Activated CD4-positive, alpha-beta T cell treated with anti-CD3 and anti-CD28 coated beads, Interleukin-2, amount 10 ng/mL, durations not matched to agents 24 days and 14 days (primary cell): ENCODE measurements at regions of chr12 and their contacts with region 1.

Region 1: DNA sequence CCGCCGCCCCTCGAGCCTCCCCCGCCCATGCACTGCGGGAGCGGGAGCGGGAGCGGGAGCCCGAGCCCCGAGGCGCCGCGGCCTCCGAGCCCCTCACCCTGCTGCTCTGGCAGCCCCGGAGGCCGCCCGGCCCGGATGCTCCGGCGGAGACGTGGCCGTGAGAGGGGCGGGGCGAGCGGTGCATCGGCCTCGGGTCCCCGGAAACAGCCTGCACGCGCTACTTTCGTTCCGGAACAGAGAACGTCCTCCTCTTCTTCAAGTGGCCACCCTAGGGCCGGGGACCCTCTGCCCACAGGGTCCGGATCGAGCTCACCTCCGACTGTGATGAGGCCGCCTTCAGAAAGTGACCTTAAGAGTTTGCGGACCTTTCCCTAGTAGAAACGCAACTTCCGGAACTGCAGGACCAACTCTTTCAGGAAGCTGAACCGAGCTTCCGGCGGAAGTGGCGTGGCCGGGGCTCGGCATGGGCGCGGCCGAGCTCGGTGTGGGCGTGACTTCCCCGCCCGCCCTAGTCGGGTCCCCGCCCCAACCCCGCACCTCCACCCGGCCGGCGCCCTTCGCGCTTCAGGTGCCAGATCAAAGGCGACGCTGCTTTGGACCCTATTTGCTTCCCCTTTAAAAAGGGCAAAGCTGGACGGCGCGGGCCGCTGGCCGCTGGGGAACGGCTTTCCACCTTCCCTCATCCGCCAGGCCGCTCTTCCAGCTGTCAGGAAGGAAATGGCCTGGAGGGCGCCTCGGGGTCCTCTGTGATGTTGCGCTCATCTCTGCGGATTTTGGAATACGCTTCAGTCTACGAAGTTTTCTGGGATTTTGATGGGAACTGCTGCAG is at the start of gene GOLGA3:
- DNase-seq: peak; percentile 98
- H3K4me3 Mint-ChIP-seq: peak within 1 kb of the TSS; percentile 98
- H3K27ac Mint-ChIP-seq: peak within 1 kb of the TSS; percentile 100
- H3K4me1 Mint-ChIP-seq: peaks cover 30% of the 10 kb centered on the region
- H3K27me3 Mint-ChIP-seq: no peaks in the 10 kb centered on the region
- total RNA-seq, gene GOLGA3: 67.6 and 68.1 TPM in 2 replicates

Region 2: GRCh38 chr12:132583736-132584135 is 245.2 kb before region 1 on chr12:
- intact Hi-C with region 1: no loop called
- DNase-seq: no peak
- H3K4me3 Mint-ChIP-seq: no peak overlapping the region
- H3K27ac Mint-ChIP-seq: no peak overlapping the region
- H3K4me1 Mint-ChIP-seq: no peaks in the 10 kb centered on the region
- H3K27me3 Mint-ChIP-seq: no peaks in the 10 kb centered on the region

Region 3: DNA sequence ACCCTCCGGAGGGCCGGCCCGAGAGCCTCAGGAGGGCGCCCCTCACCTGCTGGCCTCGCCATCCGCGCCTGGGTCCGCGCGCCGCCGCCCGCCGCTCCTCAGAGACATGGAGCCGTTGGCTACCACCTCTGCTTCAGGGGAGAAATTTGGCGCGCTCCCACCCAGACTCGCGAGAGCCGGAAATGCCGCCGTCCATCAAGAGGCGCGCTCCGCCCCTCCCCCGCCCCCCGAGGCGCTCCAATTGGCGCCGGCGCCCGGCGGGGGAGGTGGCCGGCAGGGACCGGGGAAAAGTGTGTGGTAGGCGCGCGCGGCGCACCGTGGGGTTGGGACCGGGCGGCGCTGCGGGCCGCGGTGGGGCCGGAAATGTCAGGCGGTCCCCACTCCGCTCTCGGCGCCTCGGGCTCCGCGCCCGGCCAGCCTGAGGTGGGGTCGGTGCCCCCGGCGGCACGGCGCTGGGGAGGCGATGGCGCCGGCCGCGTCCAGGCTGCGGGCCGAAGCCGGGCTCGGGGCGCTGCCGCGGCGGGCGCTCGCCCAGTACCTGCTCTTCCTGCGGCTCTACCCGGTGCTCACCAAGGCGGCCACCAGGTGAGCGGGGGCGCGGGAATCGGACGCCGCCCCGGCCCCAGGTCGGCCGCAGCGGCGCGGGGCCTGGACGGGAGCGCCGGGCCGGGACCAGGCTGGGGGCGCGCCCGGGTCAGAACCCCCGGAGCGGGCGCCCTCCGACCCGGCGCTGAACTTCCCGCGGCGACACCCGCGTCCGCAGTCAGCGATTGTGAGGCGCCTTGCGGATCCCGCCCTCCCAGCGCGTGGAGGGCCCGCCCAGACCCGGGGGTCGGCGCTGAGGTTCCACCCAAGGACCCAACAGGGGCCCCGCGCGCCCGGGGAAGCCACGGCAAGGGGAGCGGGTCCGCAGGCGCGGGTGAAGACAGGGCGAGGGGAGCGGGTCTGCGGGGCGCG is 141.4 kb before region 1 on chr12 and contains the starts of genes POLE and PXMP2:
- intact Hi-C with region 1: loop called (anchors 2 kb)
- DNase-seq: peak; percentile 98
- H3K4me3 Mint-ChIP-seq: peak within 1 kb of the TSS; percentile 85
- H3K27ac Mint-ChIP-seq: peak within 1 kb of the TSS; percentile 88
- H3K4me1 Mint-ChIP-seq: peaks cover 27% of the 10 kb centered on the region
- H3K27me3 Mint-ChIP-seq: no peaks in the 10 kb centered on the region
- total RNA-seq, gene POLE: 171 and 180 TPM in 2 replicates
- total RNA-seq, gene PXMP2: 24.4 and 24.6 TPM in 2 replicates

Region 4: DNA sequence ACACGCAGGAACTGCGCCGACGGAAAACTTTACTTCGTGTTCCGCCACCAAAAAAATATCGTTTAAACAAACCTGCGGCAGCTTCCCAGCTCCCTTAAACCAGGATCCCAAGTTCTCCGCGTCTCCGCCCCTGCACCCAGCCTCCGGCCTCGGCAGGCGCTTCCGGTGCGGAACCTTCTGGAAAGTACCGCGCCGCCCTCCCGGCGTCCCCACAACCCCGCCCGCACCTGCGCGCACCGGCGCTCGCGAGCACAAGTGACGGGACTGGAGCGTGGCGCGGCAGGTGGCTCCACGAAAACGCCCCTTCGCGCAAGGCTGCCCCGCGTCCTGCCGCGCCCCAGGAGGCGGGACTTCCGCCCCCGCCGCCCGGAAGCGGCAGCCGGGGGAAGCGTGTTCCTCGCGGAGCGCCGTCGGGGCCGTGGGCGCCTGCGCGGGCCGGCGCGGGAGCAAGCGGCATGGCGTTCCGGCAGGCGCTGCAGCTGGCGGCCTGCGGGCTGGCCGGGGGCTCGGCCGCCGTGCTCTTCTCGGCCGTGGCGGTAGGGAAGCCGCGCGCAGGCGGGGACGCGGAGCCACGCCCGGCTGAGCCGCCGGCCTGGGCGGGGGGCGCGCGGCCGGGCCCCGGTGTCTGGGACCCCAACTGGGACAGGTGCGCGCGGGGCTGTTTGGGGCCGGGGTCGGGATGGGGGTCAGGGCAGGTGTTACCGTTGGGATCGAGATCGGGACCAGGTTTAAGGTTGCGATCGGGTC is 118.3 kb before region 1 on chr12 and contains the start of gene PGAM5:
- intact Hi-C with region 1: loop called (anchors 1 kb)
- DNase-seq: peak; percentile 98
- H3K4me3 Mint-ChIP-seq: peak within 1 kb of the TSS; percentile 86
- H3K27ac Mint-ChIP-seq: peak within 1 kb of the TSS; percentile 80
- H3K4me1 Mint-ChIP-seq: peaks cover 18% of the 10 kb centered on the region
- H3K27me3 Mint-ChIP-seq: no peaks in the 10 kb centered on the region
- total RNA-seq, gene PGAM5: 104 and 110 TPM in 2 replicates

Region 5: GRCh38 chr12:132804426-132804861 is 24.5 kb before region 1 on chr12:
- intact Hi-C with region 1: no loop called
- DNase-seq: no peak
- H3K4me3 Mint-ChIP-seq: no peak overlapping the region
- H3K27ac Mint-ChIP-seq: no peak overlapping the region
- H3K4me1 Mint-ChIP-seq: peaks cover 8% of the 10 kb centered on the region
- H3K27me3 Mint-ChIP-seq: no peaks in the 10 kb centered on the region

Region 6: GRCh38 chr12:132887513-132888351 is 58.8 kb after region 1 on chr12 and contains the start of gene CHFR:
- intact Hi-C with region 1: loop called (anchors 1 kb)
- DNase-seq: peak; percentile 98
- H3K4me3 Mint-ChIP-seq: peak within 1 kb of the TSS; percentile 98
- H3K27ac Mint-ChIP-seq: peak within 1 kb of the TSS; percentile 99
- H3K4me1 Mint-ChIP-seq: peaks cover 13% of the 10 kb centered on the region
- H3K27me3 Mint-ChIP-seq: no peaks in the 10 kb centered on the region
- total RNA-seq, gene CHFR: 52.9 and 60.7 TPM in 2 replicates

Region 7: GRCh38 chr12:133181238-133181959 is 352.5 kb after region 1 on chr12 and contains the start of gene ZNF268:
- intact Hi-C with region 1: loop called (anchors 1 kb)
- DNase-seq: peak; percentile 98
- H3K4me3 Mint-ChIP-seq: peak within 1 kb of the TSS; percentile 92
- H3K27ac Mint-ChIP-seq: peak within 1 kb of the TSS; percentile 93
- H3K4me1 Mint-ChIP-seq: peaks cover 6% of the 10 kb centered on the region
- H3K27me3 Mint-ChIP-seq: no peaks in the 10 kb centered on the region
- total RNA-seq, gene ZNF268: 17.2 and 19.4 TPM in 2 replicates